AG04449 (cell line): ENCODE measurements at regions of chr11 and their contacts with region 1.

Region 1: DNA sequence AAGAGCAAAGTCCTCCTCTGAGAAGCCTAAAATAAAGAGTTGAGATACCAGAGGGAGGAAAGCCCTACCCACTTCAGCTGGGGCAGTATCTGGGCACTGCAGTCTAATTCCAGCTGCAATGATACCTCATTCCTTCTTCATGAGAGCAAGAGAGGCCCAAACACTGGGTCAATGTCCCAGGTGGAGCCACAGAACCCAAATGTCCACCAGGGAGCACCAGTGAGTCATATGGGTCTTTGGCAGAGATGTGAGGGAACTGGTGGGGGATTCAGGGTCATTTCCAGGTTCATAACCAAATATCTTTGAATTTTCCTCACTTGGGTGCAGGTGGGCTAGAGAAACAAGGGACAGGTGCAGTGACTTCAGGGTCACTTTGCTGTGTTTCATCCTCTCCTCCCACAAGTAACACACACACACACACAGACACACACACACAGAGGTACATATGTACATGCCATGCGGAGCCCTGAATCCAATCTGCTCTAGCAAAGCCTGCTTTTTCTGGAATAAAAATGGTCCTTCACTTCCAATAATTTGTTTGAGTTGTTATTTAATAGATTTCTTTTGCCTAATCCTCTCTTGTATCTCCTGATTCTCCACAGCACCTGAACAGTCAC is 585.4 kb downstream of the SOX6 start:
- DNase-seq: no peak
- H3K4me3 ChIP-seq: no peak overlapping the region
- CTCF ChIP-seq: peak; percentile 75

Region 2: DNA sequence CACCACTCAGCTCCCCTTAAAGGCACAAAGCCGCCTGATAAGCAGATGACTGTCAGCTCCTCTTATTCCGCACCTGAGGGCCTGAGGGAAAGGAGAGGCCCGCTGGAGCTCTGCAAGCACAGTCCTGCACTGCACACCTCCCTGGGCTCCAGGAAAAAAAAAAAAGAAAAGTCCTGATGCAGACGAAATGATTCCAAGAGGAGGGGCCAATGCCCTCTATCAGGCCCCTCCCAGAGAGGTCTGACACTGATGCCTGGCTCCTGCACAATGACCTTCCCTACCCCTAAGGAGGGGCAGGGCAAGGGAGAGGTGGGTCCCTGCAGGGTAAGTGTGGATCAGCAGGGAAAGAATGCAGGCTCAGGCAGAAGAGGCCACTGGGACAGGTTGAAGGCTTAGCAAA is 12.7 kb after region 1 on chr11:
- CTCF ChIA-PET with region 1: interaction called, 19 read pairs
- POLR2A ChIA-PET with region 1: no interaction called
- DNase-seq: no peak
- H3K4me3 ChIP-seq: no peak overlapping the region
- CTCF ChIP-seq: no peak

Region 3: DNA sequence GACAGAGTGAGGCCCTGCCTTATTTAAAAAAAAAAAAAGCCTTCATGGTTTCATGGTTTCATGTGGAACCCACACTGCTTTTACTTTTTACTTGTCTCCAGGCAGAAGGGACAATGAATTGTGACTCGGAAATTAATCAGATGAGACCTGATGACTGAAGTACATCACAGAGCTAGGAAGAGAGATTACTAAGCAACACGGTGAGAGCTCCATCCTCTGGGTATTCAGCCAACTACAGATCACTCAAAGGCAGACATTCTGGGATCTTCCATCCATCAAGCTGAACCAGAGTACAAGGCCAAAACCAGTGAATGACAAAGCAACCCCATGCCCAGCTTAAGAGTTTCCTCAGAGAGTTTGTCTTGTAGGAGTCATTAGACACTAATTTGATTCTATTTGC is 152.3 kb after region 1 on chr11:
- CTCF ChIA-PET with region 1: interaction called, 14 read pairs
- POLR2A ChIA-PET with region 1: no interaction called
- DNase-seq: no peak
- H3K4me3 ChIP-seq: no peak overlapping the region
- CTCF ChIP-seq: peak; percentile 25